Endothelial cell of umbilical vein (primary cell): ENCODE measurements at regions of chr1 and their contacts with region 1.

Region 1: GRCh38 chr1:156129706-156130581 is 15.4 kb downstream of the LMNA start:
- DNase-seq: peak; percentile 94
- H3K4me3 ChIP-seq: no peak overlapping the region
- H3K27ac ChIP-seq: peak overlapping the region; percentile 94
- H3K4me1 ChIP-seq: peaks cover 54% of the 10 kb centered on the region
- H3K27me3 ChIP-seq: no peaks in the 10 kb centered on the region
- CTCF ChIP-seq: peak; percentile 94
- POLR2A ChIP-seq: peak; percentile 63

Region 2: GRCh38 chr1:155961937-155962336 is 168.0 kb before region 1 on chr1:
- CTCF ChIA-PET with region 1: interaction called, 3 read pairs
- POLR2A ChIA-PET with region 1: no interaction called
- dilution Hi-C with region 1: no loop called
- intact Hi-C with region 1: loop called (anchors 10 kb)
- DNase-seq: peak; percentile 91
- H3K4me3 ChIP-seq: no peak overlapping the region
- H3K27ac ChIP-seq: peak overlapping the region; percentile 86
- H3K4me1 ChIP-seq: peaks cover 22% of the 10 kb centered on the region
- H3K27me3 ChIP-seq: no peaks in the 10 kb centered on the region
- CTCF ChIP-seq: peak; percentile 44 to 61
- POLR2A ChIP-seq: peak; percentile 7

Region 3: GRCh38 chr1:155996166-155996565 is 133.8 kb before region 1 on chr1:
- CTCF ChIA-PET with region 1: no interaction called
- POLR2A ChIA-PET with region 1: no interaction called
- dilution Hi-C with region 1: no loop called
- intact Hi-C with region 1: no loop called
- DNase-seq: no peak
- H3K4me3 ChIP-seq: no peak overlapping the region
- H3K27ac ChIP-seq: no peak overlapping the region
- H3K4me1 ChIP-seq: no peaks in the 10 kb centered on the region
- H3K27me3 ChIP-seq: no peaks in the 10 kb centered on the region
- CTCF ChIP-seq: no peak
- POLR2A ChIP-seq: no peak

Region 4: GRCh38 chr1:156082309-156083091 is 47.4 kb before region 1 on chr1 and contains the start of gene MEX3A:
- CTCF ChIA-PET with region 1: interaction called, 627 read pairs
- POLR2A ChIA-PET with region 1: no interaction called
- dilution Hi-C with region 1: no loop called
- intact Hi-C with region 1: no loop called
- DNase-seq: peak; percentile 87
- H3K4me3 ChIP-seq: peak within 1 kb of the TSS; percentile 88 to 97 (median 91)
- H3K27ac ChIP-seq: peak within 1 kb of the TSS; percentile 52
- H3K4me1 ChIP-seq: peaks cover 30% of the 10 kb centered on the region
- H3K27me3 ChIP-seq: no peaks in the 10 kb centered on the region
- CTCF ChIP-seq: no peak
- POLR2A ChIP-seq: peak; percentile 67
- total RNA-seq, gene MEX3A: 23.6 and 26.6 TPM in 2 replicates

Region 5: DNA sequence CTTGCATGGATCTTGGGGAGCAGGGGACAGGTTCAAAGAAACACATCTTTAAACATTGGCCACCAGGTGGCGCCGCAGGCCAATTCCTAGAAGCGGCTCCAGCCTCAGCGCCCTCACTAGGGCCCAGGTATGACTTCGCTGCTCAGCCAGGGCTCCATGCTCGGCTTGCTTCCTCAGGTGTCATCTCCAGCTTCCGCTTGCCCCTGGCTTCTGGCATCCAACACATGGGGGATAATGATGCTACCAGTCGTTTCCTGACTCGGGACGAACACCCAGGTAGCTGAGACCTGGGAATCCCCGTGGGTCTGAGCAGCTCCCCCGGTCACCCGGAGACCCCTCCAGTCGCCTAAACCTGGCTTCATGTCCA is 39.1 kb before region 1 on chr1:
- CTCF ChIA-PET with region 1: interaction called, 627 read pairs
- POLR2A ChIA-PET with region 1: interaction called, 3 read pairs
- dilution Hi-C with region 1: no loop called
- intact Hi-C with region 1: loop called (anchors 1 kb)
- DNase-seq: peak; percentile 74
- H3K4me3 ChIP-seq: no peak overlapping the region
- H3K27ac ChIP-seq: no peak overlapping the region
- H3K4me1 ChIP-seq: peaks cover 14% of the 10 kb centered on the region
- H3K27me3 ChIP-seq: no peaks in the 10 kb centered on the region
- CTCF ChIP-seq: peak; percentile 48 to 81
- POLR2A ChIP-seq: no peak

Region 6: GRCh38 chr1:156096640-156097391 is 33.1 kb before region 1 on chr1:
- CTCF ChIA-PET with region 1: interaction called, 627 read pairs
- POLR2A ChIA-PET with region 1: interaction called, 8 read pairs
- dilution Hi-C with region 1: no loop called
- intact Hi-C with region 1: loop called (anchors 1 kb)
- DNase-seq: peak; percentile 93
- H3K4me3 ChIP-seq: no peak overlapping the region
- H3K27ac ChIP-seq: peak overlapping the region; percentile 92
- H3K4me1 ChIP-seq: peaks cover 36% of the 10 kb centered on the region
- H3K27me3 ChIP-seq: no peaks in the 10 kb centered on the region
- CTCF ChIP-seq: peak; percentile 96 to 99
- POLR2A ChIP-seq: peak; percentile 65

Region 7: GRCh38 chr1:156104065-156104810 is 25.7 kb before region 1 on chr1:
- CTCF ChIA-PET with region 1: interaction called, 627 read pairs
- POLR2A ChIA-PET with region 1: interaction called, 6 read pairs
- dilution Hi-C with region 1: no loop called
- intact Hi-C with region 1: loop called (anchors 1 kb)
- DNase-seq: peak; percentile 91
- H3K4me3 ChIP-seq: no peak overlapping the region
- H3K27ac ChIP-seq: peak overlapping the region; percentile 97
- H3K4me1 ChIP-seq: peaks cover 57% of the 10 kb centered on the region
- H3K27me3 ChIP-seq: no peaks in the 10 kb centered on the region
- CTCF ChIP-seq: no peak
- POLR2A ChIP-seq: no peak

Region 8: GRCh38 chr1:156114101-156114916 is 15.6 kb before region 1 on chr1 and contains the start of gene LMNA:
- CTCF ChIA-PET with region 1: interaction called, 66 read pairs
- POLR2A ChIA-PET with region 1: interaction called, 55 read pairs
- dilution Hi-C with region 1: no loop called
- intact Hi-C with region 1: loop called (anchors 1 kb)
- DNase-seq: peak; percentile 92
- H3K4me3 ChIP-seq: peak within 1 kb of the TSS; percentile 40 to 97 (median 78)
- H3K27ac ChIP-seq: peak within 1 kb of the TSS; percentile 73
- H3K4me1 ChIP-seq: peaks cover 24% of the 10 kb centered on the region
- H3K27me3 ChIP-seq: no peaks in the 10 kb centered on the region
- CTCF ChIP-seq: no peak
- POLR2A ChIP-seq: peak; percentile 98
- total RNA-seq, gene LMNA: 715 and 742 TPM in 2 replicates

Region 9: DNA sequence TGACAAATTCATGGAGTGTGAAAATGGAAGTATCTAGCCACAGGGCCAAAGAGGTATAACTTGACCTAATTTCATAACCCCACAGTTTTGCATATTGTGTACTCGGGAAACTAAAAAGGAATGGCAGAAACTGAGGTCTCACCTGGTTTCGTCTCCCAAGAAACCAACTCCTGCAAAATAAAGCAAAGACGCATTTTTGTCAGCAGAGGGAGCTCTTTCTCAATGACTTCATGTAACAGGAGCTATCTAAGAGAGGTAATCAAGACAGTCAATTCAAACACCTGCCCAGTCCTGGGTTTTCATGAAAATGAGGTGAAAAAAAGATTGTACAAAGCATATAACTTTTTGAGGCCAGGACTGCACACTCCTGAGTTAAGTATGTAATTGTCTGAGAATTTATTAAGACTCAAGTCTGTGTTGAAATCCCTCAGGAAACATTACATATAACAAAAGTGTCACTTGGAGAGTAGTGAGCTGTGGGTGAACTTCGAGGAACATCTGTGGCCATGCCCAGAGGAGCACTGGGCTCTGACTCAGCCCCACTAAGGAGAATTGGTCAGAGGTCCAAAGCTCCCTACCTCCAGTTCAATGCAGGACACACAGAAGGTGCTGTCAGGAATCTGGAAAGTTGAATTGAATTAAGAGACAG is 1450.4 kb after region 1 on chr1:
- CTCF ChIA-PET with region 1: no interaction called
- POLR2A ChIA-PET with region 1: no interaction called
- dilution Hi-C with region 1: no loop called
- intact Hi-C with region 1: no loop called
- DNase-seq: peak; percentile 70
- H3K4me3 ChIP-seq: no peak overlapping the region
- H3K27ac ChIP-seq: no peak overlapping the region
- H3K4me1 ChIP-seq: no peaks in the 10 kb centered on the region
- H3K27me3 ChIP-seq: peaks cover 0 to 2% of the 10 kb centered on the region in 2 experiments
- CTCF ChIP-seq: peak; percentile 59 to 63
- POLR2A ChIP-seq: no peak